Kidney (tissue), 22 donors: ENCODE measurements at regions of chr12 and their contacts with region 1.

Region 1: GRCh38 chr12:84091651-84092050 is 820.9 kb downstream of the SLC6A15 start:
- DNase-seq: no peak
- H3K4me3 ChIP-seq: no peak overlapping the region
- H3K27ac ChIP-seq: no peak overlapping the region
- H3K4me1 ChIP-seq: no peaks in the 10 kb centered on the region
- H3K27me3 ChIP-seq: no peaks in the 10 kb centered on the region
- CTCF ChIP-seq: no peak

Region 2: DNA sequence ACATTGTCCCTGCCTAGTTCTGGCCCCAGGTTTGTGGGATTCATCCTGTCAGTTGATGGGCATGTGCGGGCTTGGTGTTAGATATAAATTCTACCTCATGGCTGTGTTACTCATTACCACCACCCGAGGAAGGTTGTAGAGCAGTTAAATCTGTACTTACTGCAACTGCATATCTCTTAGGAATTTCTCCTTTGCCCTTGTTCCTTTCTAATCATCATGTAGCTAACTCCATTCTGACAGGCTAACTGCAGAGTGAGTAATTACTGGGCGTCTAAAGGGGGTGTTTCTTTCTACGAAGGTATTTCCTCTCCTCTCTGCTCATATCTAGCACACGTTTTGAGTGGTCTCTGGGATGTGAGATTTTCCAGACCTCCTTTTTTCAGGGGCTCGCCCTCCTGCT is 328.2 kb before region 1 on chr12:
- intact Hi-C with region 1: no loop called
- DNase-seq: peak in 1 of 5 donors; percentile 23
- H3K4me3 ChIP-seq: no peak overlapping the region
- H3K27ac ChIP-seq: no peak overlapping the region
- H3K4me1 ChIP-seq: peaks cover 0 to 2% (median 0%) of the 10 kb centered on the region in 3 donors
- H3K27me3 ChIP-seq: no peaks in the 10 kb centered on the region
- CTCF ChIP-seq: no peak

Region 3: GRCh38 chr12:83807871-83808270 is 283.8 kb before region 1 on chr12:
- intact Hi-C with region 1: no loop called
- DNase-seq: no peak
- H3K4me3 ChIP-seq: no peak overlapping the region
- H3K27ac ChIP-seq: no peak overlapping the region
- H3K4me1 ChIP-seq: no peaks in the 10 kb centered on the region
- H3K27me3 ChIP-seq: no peaks in the 10 kb centered on the region
- CTCF ChIP-seq: no peak

Region 4: DNA sequence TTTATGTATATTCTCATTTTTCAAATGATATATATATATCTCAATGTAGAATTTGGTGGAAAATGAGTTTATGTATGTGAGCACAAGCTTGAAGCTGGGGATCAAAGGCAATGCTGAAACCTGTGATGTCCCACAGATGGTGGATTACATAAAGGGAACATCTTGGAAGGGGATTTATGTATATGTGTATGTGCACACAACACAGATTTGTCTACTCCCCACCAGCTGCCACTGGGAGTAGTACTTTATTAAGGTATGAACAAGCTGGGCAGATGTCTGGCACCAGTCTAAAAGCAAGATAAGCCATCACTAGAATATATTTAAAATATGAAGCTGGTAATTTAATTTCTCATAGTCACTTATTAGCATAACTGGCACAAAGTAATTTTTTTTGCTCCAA is 74.7 kb before region 1 on chr12:
- intact Hi-C with region 1: no loop called
- DNase-seq: no peak
- H3K4me3 ChIP-seq: no peak overlapping the region
- H3K27ac ChIP-seq: no peak overlapping the region
- H3K4me1 ChIP-seq: no peaks in the 10 kb centered on the region
- H3K27me3 ChIP-seq: no peaks in the 10 kb centered on the region
- CTCF ChIP-seq: no peak

Region 5: DNA sequence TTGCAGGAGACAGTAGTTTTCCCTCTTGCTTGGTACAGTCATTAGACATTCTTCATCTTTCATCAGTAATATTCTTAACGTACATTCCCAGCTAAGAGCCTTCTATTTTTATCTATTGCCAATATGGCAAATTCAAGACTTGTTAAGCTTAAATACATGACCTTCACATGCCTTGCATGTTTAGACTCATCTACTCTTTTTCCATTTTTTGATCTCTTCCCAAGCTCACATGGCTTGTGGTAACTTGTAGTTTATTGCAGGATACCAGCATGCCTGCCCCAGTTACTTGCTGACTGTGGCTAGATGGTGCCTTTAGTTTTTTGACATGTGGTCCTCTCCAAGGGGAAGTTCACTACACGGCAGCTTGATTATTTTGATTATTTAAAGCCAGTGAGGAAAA is 91.9 kb after region 1 on chr12:
- intact Hi-C with region 1: loop called (anchors 5 kb)
- DNase-seq: no peak
- H3K4me3 ChIP-seq: no peak overlapping the region
- H3K27ac ChIP-seq: no peak overlapping the region
- H3K4me1 ChIP-seq: no peaks in the 10 kb centered on the region
- H3K27me3 ChIP-seq: no peaks in the 10 kb centered on the region
- CTCF ChIP-seq: no peak